ENCODE measurements at regions of chr1 and their contacts with region 1.

Region 1: GRCh38 chr1:59699227-59699847 is 115.4 kb upstream of the HOOK1 start:
- DNase-seq: peak; percentile 37
- ATAC-seq: peak; percentile 34
- H3K4me3 Mint-ChIP-seq: no peak overlapping the region
- H3K27ac Mint-ChIP-seq: no peak overlapping the region
- H3K4me1 Mint-ChIP-seq: peaks cover 31% of the 10 kb centered on the region
- H3K27me3 Mint-ChIP-seq: no peaks in the 10 kb centered on the region

Region 2: DNA sequence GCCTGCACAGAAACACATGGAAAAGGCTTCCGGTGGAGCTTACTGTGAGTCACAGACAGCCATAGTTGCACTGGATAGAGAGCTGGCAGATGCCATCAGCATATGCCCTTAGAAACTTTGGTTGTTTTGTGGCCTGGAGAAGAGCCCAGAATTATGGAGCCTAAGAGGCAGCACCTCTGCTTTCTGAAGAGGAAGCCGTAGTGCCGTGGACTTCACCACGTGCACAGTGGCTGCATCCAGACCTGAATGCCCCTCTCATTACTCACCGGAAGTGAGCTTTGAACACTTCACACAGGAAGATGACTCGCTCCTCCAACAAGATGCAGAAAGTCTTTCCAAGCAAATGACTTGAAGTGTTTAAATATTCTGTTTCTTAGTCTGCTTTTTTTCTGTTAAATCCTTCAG is 943.9 kb before region 1 on chr1:
- CTCF ChIA-PET with region 1: interaction called, 13 read pairs
- POLR2A ChIA-PET with region 1: no interaction called
- DNase-seq: peak; percentile 71
- ATAC-seq: peak; percentile 75
- H3K4me3 Mint-ChIP-seq: peak overlapping the region; percentile 45
- H3K27ac Mint-ChIP-seq: peak overlapping the region; percentile 90
- H3K4me1 Mint-ChIP-seq: peaks cover 50% of the 10 kb centered on the region
- H3K27me3 Mint-ChIP-seq: no peaks in the 10 kb centered on the region

Region 3: DNA sequence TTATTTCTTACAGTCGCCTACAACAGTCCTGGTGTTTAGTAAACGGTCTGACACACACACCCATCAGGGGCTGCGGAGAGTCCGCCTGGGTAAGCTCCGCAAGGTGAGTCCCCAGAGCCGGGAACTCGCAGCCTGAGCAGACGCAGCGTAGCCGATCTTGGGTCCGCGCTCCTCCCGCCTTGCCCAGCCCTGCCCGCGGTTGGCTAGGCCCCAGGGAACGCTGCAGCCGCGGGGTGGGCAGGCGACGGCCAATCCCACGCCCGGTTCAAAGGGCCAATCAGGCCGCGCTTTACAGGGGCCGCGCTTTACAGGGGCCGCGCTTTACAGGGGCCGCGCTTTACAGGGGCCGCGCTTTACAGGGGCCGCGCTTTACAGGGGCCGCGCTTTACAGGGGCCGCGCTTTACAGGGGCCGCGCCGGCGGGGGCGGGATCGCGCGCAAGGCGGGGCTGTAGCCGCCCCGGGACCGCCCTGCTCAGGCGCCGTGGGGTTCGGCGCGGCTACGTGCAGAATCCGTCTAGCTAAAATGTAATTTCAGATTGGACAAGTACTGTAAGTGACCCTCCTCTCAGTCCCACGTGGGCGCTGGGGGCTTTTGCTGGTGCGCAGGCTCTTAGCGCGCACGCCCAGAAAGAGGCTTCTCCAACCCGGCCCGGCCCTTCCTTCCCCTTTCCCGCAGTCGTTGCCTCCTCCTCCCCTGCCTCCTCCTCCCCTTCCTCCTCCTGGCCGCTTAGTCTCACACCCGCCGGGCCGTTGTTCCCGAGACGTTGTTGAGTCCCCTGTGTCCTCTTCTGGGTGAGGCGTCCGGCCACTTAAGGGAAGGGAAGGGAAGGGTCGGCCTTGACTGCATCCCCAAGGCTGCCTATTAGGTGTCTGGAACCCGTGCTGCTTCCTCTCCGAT is 402.7 kb before region 1 on chr1 and contains the start of gene FGGY:
- CTCF ChIA-PET with region 1: interaction called, 10 read pairs
- POLR2A ChIA-PET with region 1: interaction called, 6 read pairs
- DNase-seq: peak; percentile 94
- ATAC-seq: peak; percentile 97
- H3K4me3 Mint-ChIP-seq: peak within 1 kb of the TSS; percentile 88
- H3K27ac Mint-ChIP-seq: peak within 1 kb of the TSS; percentile 90
- H3K4me1 Mint-ChIP-seq: peaks cover 30% of the 10 kb centered on the region
- H3K27me3 Mint-ChIP-seq: no peaks in the 10 kb centered on the region
- total RNA-seq, gene FGGY: 8.5 to 9.4 TPM

Region 4: GRCh38 chr1:59352065-59352464 is 347.3 kb before region 1 on chr1:
- CTCF ChIA-PET with region 1: interaction called, 11 read pairs
- POLR2A ChIA-PET with region 1: no interaction called
- DNase-seq: no peak
- ATAC-seq: no peak
- H3K4me3 Mint-ChIP-seq: no peak overlapping the region
- H3K27ac Mint-ChIP-seq: no peak overlapping the region
- H3K4me1 Mint-ChIP-seq: peaks cover 25% of the 10 kb centered on the region
- H3K27me3 Mint-ChIP-seq: no peaks in the 10 kb centered on the region

Region 5: GRCh38 chr1:59669752-59670312 is 29.5 kb before region 1 on chr1:
- CTCF ChIA-PET with region 1: no interaction called
- POLR2A ChIA-PET with region 1: no interaction called
- DNase-seq: no peak
- ATAC-seq: no peak
- H3K4me3 Mint-ChIP-seq: no peak overlapping the region
- H3K27ac Mint-ChIP-seq: no peak overlapping the region
- H3K4me1 Mint-ChIP-seq: no peaks in the 10 kb centered on the region
- H3K27me3 Mint-ChIP-seq: no peaks in the 10 kb centered on the region

Region 6: DNA sequence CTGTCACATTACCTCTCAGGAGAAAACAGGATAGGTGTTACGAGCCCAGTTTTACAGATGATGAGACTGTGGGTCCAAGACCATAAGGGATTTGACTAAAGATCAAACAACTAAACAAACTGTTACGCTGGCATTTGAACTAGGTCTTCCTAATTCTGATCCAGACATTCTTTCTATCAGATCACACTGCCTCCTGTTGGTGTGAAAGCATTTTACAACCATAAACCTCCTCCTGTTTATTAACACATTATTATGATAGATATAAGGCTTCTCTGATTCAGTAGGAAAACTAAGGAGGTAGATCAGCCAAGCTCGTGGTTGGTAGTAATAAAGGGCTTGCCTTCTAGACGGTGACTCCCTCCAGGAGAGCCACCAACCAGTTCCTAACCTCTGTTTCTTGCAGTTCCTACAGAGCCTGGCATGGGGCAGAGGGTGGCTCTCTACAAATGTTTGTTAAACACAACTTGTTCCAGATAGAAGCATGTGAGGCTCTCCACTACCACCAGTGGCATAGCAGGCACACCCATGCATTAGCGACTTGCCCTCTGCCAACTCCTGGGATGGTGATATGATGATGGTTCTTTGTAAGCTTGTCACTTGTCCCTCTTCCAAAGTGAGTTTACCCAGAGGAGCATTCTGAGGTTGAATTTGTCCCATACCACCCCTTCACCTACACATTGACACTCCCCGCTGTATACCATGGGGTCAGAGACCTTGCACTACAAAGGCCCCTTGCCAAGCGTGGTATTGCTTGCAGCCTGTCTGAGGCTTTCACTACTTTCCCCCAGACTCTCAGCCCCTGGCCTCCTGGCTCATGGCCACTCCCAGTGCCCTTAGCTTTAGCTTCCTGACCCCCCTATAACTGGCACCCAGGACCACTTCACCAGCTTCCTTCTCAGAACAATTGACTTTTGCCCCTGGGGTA is 19.0 kb after region 1 on chr1:
- CTCF ChIA-PET with region 1: interaction called, 12 read pairs
- POLR2A ChIA-PET with region 1: no interaction called
- DNase-seq: no peak
- ATAC-seq: no peak
- H3K4me3 Mint-ChIP-seq: no peak overlapping the region
- H3K27ac Mint-ChIP-seq: no peak overlapping the region
- H3K4me1 Mint-ChIP-seq: no peaks in the 10 kb centered on the region
- H3K27me3 Mint-ChIP-seq: no peaks in the 10 kb centered on the region

Region 7: GRCh38 chr1:60160141-60160540 is 460.8 kb after region 1 on chr1:
- CTCF ChIA-PET with region 1: no interaction called
- POLR2A ChIA-PET with region 1: no interaction called
- DNase-seq: no peak
- ATAC-seq: no peak
- H3K4me3 Mint-ChIP-seq: no peak overlapping the region
- H3K27ac Mint-ChIP-seq: no peak overlapping the region
- H3K4me1 Mint-ChIP-seq: no peaks in the 10 kb centered on the region
- H3K27me3 Mint-ChIP-seq: no peaks in the 10 kb centered on the region